CD4-positive, alpha-beta memory T cell (primary cell): ENCODE measurements at regions of chr14 and their contacts with region 1.

Region 1: DNA sequence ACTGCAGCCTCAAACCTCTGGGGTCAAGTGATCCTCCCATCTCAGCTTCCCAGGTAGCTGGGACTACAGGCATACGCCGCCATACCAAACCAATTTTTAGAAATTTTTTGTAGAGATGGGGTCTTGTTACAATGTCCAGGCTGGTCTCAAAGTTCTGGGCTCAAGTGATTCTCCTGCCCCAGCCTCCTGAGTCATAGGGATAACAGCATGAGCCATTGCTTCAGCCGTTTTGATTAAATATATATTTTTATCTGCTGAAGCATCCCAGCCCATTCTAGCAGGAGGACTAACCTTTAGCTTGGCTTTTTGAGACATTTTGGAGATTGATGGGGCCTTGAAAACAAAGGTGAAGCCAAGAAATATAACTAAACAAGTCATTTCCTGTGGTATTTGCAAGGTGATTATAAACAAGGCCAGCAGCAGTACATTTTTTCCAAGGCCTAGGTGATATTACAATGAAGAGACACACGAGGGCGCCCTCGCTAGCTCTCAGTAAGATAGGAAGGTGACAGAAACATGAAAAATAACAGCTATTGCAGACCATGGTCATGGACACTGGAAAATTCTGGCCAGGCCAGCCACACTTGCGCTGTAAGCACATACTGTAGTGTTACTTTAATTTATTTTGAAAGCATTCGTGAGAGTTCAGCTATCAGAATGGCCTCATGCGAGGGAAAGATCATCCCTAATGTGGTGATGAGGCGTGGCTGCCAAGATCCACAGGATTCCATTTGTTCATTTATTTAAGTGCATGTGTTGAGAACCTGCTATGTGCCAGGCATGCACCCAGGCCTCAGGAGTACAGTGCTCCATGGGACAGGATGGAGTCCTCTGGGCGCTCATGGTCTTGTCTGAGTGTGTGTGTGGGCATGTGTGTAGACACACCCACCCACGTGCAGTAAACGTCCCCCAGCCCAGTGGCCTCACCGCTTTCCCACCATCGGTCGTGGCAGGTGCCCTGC is 63.5 kb downstream of the DGLUCY start:
- DNase-seq: peak; percentile 75 to 79 (median 77)
- H3K4me3 ChIP-seq: no peak overlapping the region
- H3K4me3 Mint-ChIP-seq: no peak overlapping the region
- H3K27ac ChIP-seq: peak overlapping the region; percentile 35
- H3K27ac Mint-ChIP-seq: peak overlapping the region; percentile 65 to 97 (median 94)
- H3K4me1 ChIP-seq: peaks cover 12% of the 10 kb centered on the region
- H3K4me1 Mint-ChIP-seq: peaks cover 13 to 23% (median 15%) of the 10 kb centered on the region in 4 donors
- H3K27me3 ChIP-seq: no peaks in the 10 kb centered on the region
- H3K27me3 Mint-ChIP-seq: no peaks in the 10 kb centered on the region

Region 2: DNA sequence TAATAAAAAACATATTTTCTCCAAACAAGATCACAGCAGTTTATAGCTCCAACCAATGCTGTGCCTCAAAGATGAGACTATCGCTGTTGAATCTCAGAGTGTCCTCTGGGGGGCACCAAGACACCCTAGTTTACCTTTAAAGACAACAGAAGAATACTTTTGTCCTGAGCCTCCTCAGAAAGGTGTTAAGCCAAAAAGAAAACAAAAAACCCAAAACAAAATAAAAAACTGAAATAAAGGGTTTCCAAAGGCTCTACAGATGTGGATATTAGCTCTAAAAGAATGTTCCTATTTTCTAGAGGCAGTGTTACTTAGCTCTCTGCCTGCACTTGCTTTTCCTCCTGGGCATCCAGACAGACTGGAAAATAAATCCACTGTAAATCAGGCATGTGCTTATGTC is 274.3 kb before region 1 on chr14:
- CTCF ChIA-PET with region 1: interaction called, 246 read pairs
- POLR2A ChIA-PET with region 1: interaction called, 7 read pairs
- intact Hi-C with region 1: loop called (anchors 1 kb)
- DNase-seq: peak; percentile 58 to 63 (median 61)
- H3K4me3 ChIP-seq: no peak overlapping the region
- H3K4me3 Mint-ChIP-seq: no peak overlapping the region
- H3K27ac ChIP-seq: no peak overlapping the region
- H3K27ac Mint-ChIP-seq: peak overlapping the region in 1 of 7 donors; percentile 6
- H3K4me1 ChIP-seq: no peaks in the 10 kb centered on the region
- H3K4me1 Mint-ChIP-seq: peaks cover 0 to 9% (median 3%) of the 10 kb centered on the region in 4 donors
- H3K27me3 ChIP-seq: no peaks in the 10 kb centered on the region
- H3K27me3 Mint-ChIP-seq: no peaks in the 10 kb centered on the region

Region 3: DNA sequence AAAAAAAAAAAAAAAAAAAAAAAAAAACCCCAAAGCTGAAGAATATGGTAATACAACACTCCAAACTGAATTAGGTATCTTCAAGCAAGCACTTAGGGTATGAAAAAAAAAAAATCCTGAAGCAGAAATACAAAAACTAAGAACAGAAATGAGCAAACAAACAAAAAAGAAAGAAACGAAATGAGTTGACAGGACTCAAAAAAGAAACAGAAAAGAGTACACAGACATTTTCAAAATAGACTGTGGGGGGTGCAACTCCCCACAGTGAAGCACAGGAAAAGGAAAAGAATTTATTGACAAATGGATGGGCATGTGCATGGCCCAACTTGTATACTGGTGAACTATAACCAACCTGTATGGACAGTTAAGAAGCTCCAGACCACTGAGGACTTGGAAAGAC is 141.5 kb before region 1 on chr14:
- CTCF ChIA-PET with region 1: interaction called, 12 read pairs
- POLR2A ChIA-PET with region 1: no interaction called
- intact Hi-C with region 1: no loop called
- DNase-seq: no peak
- H3K4me3 ChIP-seq: no peak overlapping the region
- H3K4me3 Mint-ChIP-seq: peak overlapping the region in 5 of 8 donors; percentile 8 to 55 (median 18)
- H3K27ac ChIP-seq: no peak overlapping the region
- H3K27ac Mint-ChIP-seq: peak overlapping the region; percentile 8 to 83 (median 62)
- H3K4me1 ChIP-seq: peaks cover 23% of the 10 kb centered on the region
- H3K4me1 Mint-ChIP-seq: peaks cover 53 to 80% (median 67%) of the 10 kb centered on the region in 4 donors
- H3K27me3 ChIP-seq: no peaks in the 10 kb centered on the region
- H3K27me3 Mint-ChIP-seq: no peaks in the 10 kb centered on the region

Region 4: GRCh38 chr14:91138511-91139359 is 38.6 kb before region 1 on chr14:
- CTCF ChIA-PET with region 1: interaction called, 18 read pairs
- POLR2A ChIA-PET with region 1: no interaction called
- intact Hi-C with region 1: no loop called
- DNase-seq: peak; percentile 40 to 53 (median 48)
- H3K4me3 ChIP-seq: no peak overlapping the region
- H3K4me3 Mint-ChIP-seq: no peak overlapping the region
- H3K27ac ChIP-seq: no peak overlapping the region
- H3K27ac Mint-ChIP-seq: peak overlapping the region in 4 of 7 donors; percentile 13 to 64 (median 60)
- H3K4me1 ChIP-seq: peaks cover 20% of the 10 kb centered on the region
- H3K4me1 Mint-ChIP-seq: peaks cover 23 to 45% (median 37%) of the 10 kb centered on the region in 4 donors
- H3K27me3 ChIP-seq: no peaks in the 10 kb centered on the region
- H3K27me3 Mint-ChIP-seq: no peaks in the 10 kb centered on the region

Region 5: GRCh38 chr14:91202234-91202974 is 25.1 kb after region 1 on chr14:
- CTCF ChIA-PET with region 1: interaction called, 10 read pairs
- POLR2A ChIA-PET with region 1: no interaction called
- intact Hi-C with region 1: no loop called
- DNase-seq: no peak
- H3K4me3 ChIP-seq: no peak overlapping the region
- H3K4me3 Mint-ChIP-seq: peak overlapping the region in 6 of 8 donors; percentile 32 to 73 (median 50)
- H3K27ac ChIP-seq: no peak overlapping the region
- H3K27ac Mint-ChIP-seq: peak overlapping the region in 6 of 7 donors; percentile 52 to 86 (median 68)
- H3K4me1 ChIP-seq: peaks cover 25% of the 10 kb centered on the region
- H3K4me1 Mint-ChIP-seq: peaks cover 24 to 44% (median 34%) of the 10 kb centered on the region in 4 donors
- H3K27me3 ChIP-seq: no peaks in the 10 kb centered on the region
- H3K27me3 Mint-ChIP-seq: no peaks in the 10 kb centered on the region

Region 6: GRCh38 chr14:91249841-91250616 is 72.7 kb after region 1 on chr14:
- CTCF ChIA-PET with region 1: interaction called, 52 read pairs
- POLR2A ChIA-PET with region 1: interaction called, 51 read pairs
- intact Hi-C with region 1: no loop called
- DNase-seq: peak; percentile 41 to 72 (median 53)
- H3K4me3 ChIP-seq: peak overlapping the region in 1 of 2 donors; percentile 25
- H3K4me3 Mint-ChIP-seq: peak overlapping the region; percentile 61 to 75 (median 68)
- H3K27ac ChIP-seq: peak overlapping the region; percentile 75
- H3K27ac Mint-ChIP-seq: peak overlapping the region; percentile 92 to 99 (median 97)
- H3K4me1 ChIP-seq: peaks cover 95% of the 10 kb centered on the region
- H3K4me1 Mint-ChIP-seq: peaks cover 64 to 90% (median 80%) of the 10 kb centered on the region in 4 donors
- H3K27me3 ChIP-seq: no peaks in the 10 kb centered on the region
- H3K27me3 Mint-ChIP-seq: no peaks in the 10 kb centered on the region

Region 7: GRCh38 chr14:91333650-91334039 is 156.3 kb after region 1 on chr14:
- CTCF ChIA-PET with region 1: no interaction called
- POLR2A ChIA-PET with region 1: no interaction called
- intact Hi-C with region 1: no loop called
- DNase-seq: no peak
- H3K4me3 ChIP-seq: no peak overlapping the region
- H3K4me3 Mint-ChIP-seq: no peak overlapping the region
- H3K27ac ChIP-seq: no peak overlapping the region
- H3K27ac Mint-ChIP-seq: peak overlapping the region; percentile 44 to 98 (median 75)
- H3K4me1 ChIP-seq: peaks cover 55% of the 10 kb centered on the region
- H3K4me1 Mint-ChIP-seq: peaks cover 36 to 68% (median 55%) of the 10 kb centered on the region in 4 donors
- H3K27me3 ChIP-seq: no peaks in the 10 kb centered on the region
- H3K27me3 Mint-ChIP-seq: no peaks in the 10 kb centered on the region

Region 8: GRCh38 chr14:91418387-91419043 is 241.2 kb after region 1 on chr14:
- CTCF ChIA-PET with region 1: interaction called, 5 read pairs
- POLR2A ChIA-PET with region 1: interaction called, 4 read pairs
- intact Hi-C with region 1: loop called (anchors 2 kb)
- DNase-seq: peak; percentile 82 to 86 (median 84)
- H3K4me3 ChIP-seq: peak overlapping the region; percentile 46 to 52
- H3K4me3 Mint-ChIP-seq: peak overlapping the region; percentile 76 to 95 (median 84)
- H3K27ac ChIP-seq: peak overlapping the region; percentile 67
- H3K27ac Mint-ChIP-seq: peak overlapping the region; percentile 90 to 100 (median 95)
- H3K4me1 ChIP-seq: peaks cover 32% of the 10 kb centered on the region
- H3K4me1 Mint-ChIP-seq: peaks cover 23 to 56% (median 33%) of the 10 kb centered on the region in 4 donors
- H3K27me3 ChIP-seq: no peaks in the 10 kb centered on the region
- H3K27me3 Mint-ChIP-seq: peaks cover 0 to 1% of the 10 kb centered on the region in 2 donors

Region 9: DNA sequence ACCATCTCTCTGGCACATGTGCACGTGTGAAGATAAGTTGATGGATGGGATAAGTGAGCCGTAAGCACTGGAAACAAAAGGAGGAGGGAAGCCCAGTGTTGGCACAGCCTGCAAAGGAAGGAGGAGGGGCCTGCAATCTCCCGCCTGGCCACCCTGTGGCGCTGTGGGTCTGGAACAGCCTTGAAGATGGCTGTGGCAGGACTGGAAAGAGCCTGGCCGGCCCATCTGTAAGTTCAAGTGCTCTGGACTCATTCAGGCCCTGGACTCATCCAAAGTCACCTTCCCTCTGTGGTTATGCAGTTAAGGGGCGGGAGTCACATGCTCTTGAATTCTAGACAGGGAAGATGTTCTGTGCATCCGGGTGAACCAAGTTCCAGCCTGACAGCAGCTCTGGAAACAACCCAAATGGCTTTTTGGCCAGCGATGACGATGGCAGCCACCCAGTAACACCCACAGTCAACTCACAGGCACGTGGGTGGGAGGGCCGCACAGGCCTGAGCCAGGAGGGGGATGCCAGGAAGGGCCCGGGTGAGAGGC is 1796.0 kb after region 1 on chr14:
- CTCF ChIA-PET with region 1: no interaction called
- POLR2A ChIA-PET with region 1: no interaction called
- intact Hi-C with region 1: no loop called
- DNase-seq: no peak
- H3K4me3 ChIP-seq: no peak overlapping the region
- H3K4me3 Mint-ChIP-seq: no peak overlapping the region
- H3K27ac ChIP-seq: no peak overlapping the region
- H3K27ac Mint-ChIP-seq: peak overlapping the region in 2 of 7 donors; percentile 43 to 64
- H3K4me1 ChIP-seq: no peaks in the 10 kb centered on the region
- H3K4me1 Mint-ChIP-seq: peaks cover 0 to 5% (median 0%) of the 10 kb centered on the region in 4 donors
- H3K27me3 ChIP-seq: no peaks in the 10 kb centered on the region
- H3K27me3 Mint-ChIP-seq: no peaks in the 10 kb centered on the region